Adrenal gland (tissue), 19 donors: ENCODE measurements at regions of chr2 and their contacts with region 1.

Region 1: DNA sequence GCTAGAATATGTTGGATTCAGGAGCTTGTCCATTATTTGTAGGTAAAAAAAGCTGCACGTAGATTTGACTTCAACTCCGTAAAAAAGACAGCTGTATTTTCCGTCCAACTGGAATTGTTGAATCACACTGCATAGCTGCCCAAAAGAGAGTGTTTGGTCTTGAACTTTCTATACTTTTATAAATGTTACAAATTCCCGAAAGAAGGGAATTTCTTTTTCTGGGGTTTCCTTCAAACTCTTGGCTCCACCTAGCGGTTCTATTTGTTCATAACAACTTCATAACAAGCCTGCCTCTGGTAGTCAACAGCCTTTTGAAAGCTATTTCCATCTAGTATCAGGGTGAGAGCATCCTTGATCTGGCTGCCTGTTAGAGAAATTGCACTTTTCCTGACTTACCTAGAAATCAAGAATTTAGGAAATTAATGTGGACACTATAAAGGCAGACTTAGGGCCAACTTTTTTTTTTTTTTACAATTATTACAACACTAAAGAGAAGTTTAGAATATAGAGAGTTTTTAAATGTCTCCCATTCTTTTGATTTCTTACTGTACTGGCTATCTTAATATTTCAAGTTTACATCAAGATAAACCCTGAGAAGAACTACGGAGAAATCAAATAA is 48.1 kb downstream of the TMEM185B start:
- DNase-seq: peak; percentile 21 to 59 (median 37)
- H3K4me3 ChIP-seq: no peak overlapping the region
- H3K27ac ChIP-seq: peak overlapping the region in 1 of 5 donors; percentile 69
- H3K4me1 ChIP-seq: peaks cover 5% of the 10 kb centered on the region in 2 donors
- H3K27me3 ChIP-seq: no peaks in the 10 kb centered on the region
- CTCF ChIP-seq: peak; percentile 58 to 83 (median 79)
- POLR2A ChIP-seq: no peak

Region 2: DNA sequence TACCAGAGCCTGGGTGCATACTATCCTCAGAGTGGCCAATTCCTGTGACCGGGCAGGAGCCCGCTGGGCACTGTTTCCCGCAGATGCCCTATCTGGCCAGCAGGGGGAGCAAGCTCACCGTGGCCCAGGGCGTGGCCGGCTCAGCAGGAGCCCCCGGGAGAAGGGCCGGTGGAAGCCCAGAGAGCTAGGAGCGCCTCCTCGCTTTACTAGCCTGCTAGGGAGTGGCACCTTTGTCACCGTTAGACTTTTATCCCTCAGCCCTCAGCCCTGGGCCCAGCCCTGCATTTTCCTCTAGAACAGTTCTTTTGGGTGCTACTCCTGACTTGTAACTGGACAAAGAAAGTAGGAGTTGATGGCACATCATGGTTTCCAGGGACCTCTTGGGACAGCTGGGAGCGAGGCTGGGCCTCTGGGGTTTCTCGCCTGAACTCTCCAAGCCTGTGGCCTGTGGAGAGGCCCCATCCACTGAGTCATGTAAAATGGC is 472.1 kb before region 1 on chr2:
- intact Hi-C with region 1: loop called in 1 of 2 experiments (anchors 10 kb)
- DNase-seq: peak; percentile 60 to 81 (median 71)
- H3K4me3 ChIP-seq: no peak overlapping the region
- H3K27ac ChIP-seq: no peak overlapping the region
- H3K4me1 ChIP-seq: peaks cover 0 to 4% of the 10 kb centered on the region in 2 donors
- H3K27me3 ChIP-seq: no peaks in the 10 kb centered on the region
- CTCF ChIP-seq: peak; percentile 71 to 97 (median 92)
- POLR2A ChIP-seq: no peak

Region 3: DNA sequence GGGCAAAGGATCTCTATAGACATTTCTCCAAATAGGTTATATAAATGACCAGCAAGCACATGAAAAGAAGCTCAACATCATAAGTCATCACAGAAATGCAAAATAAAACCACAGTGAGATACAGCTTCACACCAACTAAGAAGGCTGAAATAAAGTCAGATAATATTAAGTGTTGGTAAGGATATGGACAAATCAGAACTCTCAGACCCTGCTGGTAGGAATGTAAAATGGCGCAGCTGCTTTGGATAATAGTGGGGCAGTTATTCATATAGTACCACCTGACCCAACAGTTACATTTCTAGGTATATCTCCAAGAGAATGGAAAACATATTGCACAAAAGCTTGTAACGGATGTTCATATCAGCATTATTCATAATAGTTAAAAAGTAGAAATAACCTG is 148.2 kb before region 1 on chr2:
- intact Hi-C with region 1: no loop called
- DNase-seq: no peak
- H3K4me3 ChIP-seq: no peak overlapping the region
- H3K27ac ChIP-seq: no peak overlapping the region
- H3K4me1 ChIP-seq: no peaks in the 10 kb centered on the region
- H3K27me3 ChIP-seq: no peaks in the 10 kb centered on the region
- CTCF ChIP-seq: no peak
- POLR2A ChIP-seq: no peak